SK-N-SH (cell line): ENCODE measurements at regions of chr6 and their contacts with region 1.

Region 1: DNA sequence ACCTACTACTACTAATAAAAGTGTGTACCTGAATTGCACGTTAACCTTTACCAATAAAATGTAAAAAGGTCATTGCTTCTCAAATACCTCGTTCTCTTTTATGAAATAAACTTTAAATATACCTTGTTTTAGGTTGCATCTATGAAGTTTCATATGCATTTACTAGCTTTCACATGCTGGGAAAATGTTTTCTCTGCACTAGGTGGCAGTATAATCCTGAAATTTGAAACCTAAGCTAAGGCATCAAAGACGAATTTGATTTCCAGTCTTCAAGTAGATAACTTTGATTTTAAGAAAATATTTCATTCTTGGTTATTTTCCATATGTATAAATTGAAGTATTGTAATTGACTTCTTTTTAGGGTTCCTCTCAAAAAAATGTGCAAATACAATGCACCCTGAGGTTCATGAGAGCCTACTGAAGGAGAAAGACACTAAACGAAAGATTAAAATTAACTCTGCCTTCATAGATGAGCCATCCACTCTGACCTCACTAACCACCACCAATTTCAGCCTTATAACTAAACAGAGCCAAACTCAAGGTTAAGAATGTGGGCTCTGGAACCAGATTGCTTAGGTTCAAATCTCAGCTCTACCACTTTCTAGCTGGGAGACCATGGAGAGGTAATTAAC is 7.3 kb upstream of the COL9A1 start:
- DNase-seq: peak; percentile 8
- H3K4me3 ChIP-seq: peak overlapping the region in 1 of 2 experiments; percentile 11; a peak in 1 of 4 replicates
- H3K27ac ChIP-seq: no peak overlapping the region
- H3K4me1 ChIP-seq: no peaks in the 10 kb centered on the region
- H3K27me3 ChIP-seq: peaks cover under 1% of the 10 kb centered on the region; the same call in 1 of the 2 replicates
- CTCF ChIP-seq: peak; percentile 83
- EP300 ChIP-seq: no peak
- RAD21 ChIP-seq: peak; percentile 82

Region 2: DNA sequence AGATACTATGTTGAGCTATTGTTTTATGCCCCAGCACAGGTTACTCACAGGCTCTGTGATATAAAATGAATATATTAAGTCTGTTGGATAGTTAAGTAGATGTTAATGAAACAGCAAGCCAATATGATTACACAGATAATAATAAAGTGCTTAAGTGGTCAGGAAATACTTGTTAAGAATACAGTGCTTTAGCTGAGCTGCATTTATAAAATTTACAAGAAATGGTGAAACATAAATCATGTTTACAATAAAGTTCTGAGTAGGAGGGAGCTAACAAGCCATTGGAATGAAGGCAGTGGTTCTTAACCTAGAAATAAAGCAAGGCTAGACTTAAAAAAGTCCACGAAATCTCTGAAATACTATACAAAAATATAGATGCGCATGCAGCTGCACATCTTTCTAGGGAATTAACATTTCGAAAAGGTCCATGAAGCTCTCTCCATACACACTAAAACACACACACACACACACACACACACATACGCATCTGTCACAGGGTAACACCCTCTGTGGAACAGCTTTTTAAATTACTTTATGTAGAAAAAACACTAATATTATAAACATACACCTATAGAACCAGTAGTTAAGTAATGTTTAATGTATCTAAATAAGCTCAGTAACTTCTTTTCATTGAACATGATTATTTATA is 94.6 kb before region 1 on chr6:
- CTCF ChIA-PET with region 1: interaction called, 50 read pairs
- POLR2A ChIA-PET with region 1: no interaction called
- DNase-seq: no peak
- H3K4me3 ChIP-seq: no peak overlapping the region
- H3K27ac ChIP-seq: no peak overlapping the region
- H3K4me1 ChIP-seq: no peaks in the 10 kb centered on the region
- H3K27me3 ChIP-seq: no peaks in the 10 kb centered on the region
- CTCF ChIP-seq: no peak
- EP300 ChIP-seq: no peak
- RAD21 ChIP-seq: no peak

Region 3: GRCh38 chr6:70289299-70289698 is 20.9 kb before region 1 on chr6:
- CTCF ChIA-PET with region 1: interaction called, 31 read pairs
- POLR2A ChIA-PET with region 1: no interaction called
- DNase-seq: peak; percentile 13
- H3K4me3 ChIP-seq: no peak overlapping the region
- H3K27ac ChIP-seq: no peak overlapping the region
- H3K4me1 ChIP-seq: no peaks in the 10 kb centered on the region
- H3K27me3 ChIP-seq: no peaks in the 10 kb centered on the region
- CTCF ChIP-seq: peak; percentile 25; the same call in 1 of the 2 replicates
- EP300 ChIP-seq: no peak
- RAD21 ChIP-seq: no peak

Region 4: GRCh38 chr6:70336996-70337742 is 27.0 kb after region 1 on chr6:
- CTCF ChIA-PET with region 1: interaction called, 42 read pairs
- POLR2A ChIA-PET with region 1: no interaction called
- DNase-seq: no peak
- H3K4me3 ChIP-seq: no peak overlapping the region
- H3K27ac ChIP-seq: no peak overlapping the region
- H3K4me1 ChIP-seq: no peaks in the 10 kb centered on the region
- H3K27me3 ChIP-seq: no peaks in the 10 kb centered on the region
- CTCF ChIP-seq: no peak
- EP300 ChIP-seq: no peak
- RAD21 ChIP-seq: no peak

Region 5: GRCh38 chr6:70369332-70369950 is 59.3 kb after region 1 on chr6:
- CTCF ChIA-PET with region 1: interaction called, 321 read pairs
- POLR2A ChIA-PET with region 1: no interaction called
- DNase-seq: peak; percentile 60
- H3K4me3 ChIP-seq: peak overlapping the region in 1 of 2 experiments; percentile 24; a peak in 1 of 4 replicates
- H3K27ac ChIP-seq: no peak overlapping the region
- H3K4me1 ChIP-seq: no peaks in the 10 kb centered on the region; a peak in 2 of 4 replicates
- H3K27me3 ChIP-seq: peaks cover 6% of the 10 kb centered on the region; the same call in 1 of the 2 replicates
- CTCF ChIP-seq: peak; percentile 89
- EP300 ChIP-seq: no peak
- RAD21 ChIP-seq: peak; percentile 85

Region 6: DNA sequence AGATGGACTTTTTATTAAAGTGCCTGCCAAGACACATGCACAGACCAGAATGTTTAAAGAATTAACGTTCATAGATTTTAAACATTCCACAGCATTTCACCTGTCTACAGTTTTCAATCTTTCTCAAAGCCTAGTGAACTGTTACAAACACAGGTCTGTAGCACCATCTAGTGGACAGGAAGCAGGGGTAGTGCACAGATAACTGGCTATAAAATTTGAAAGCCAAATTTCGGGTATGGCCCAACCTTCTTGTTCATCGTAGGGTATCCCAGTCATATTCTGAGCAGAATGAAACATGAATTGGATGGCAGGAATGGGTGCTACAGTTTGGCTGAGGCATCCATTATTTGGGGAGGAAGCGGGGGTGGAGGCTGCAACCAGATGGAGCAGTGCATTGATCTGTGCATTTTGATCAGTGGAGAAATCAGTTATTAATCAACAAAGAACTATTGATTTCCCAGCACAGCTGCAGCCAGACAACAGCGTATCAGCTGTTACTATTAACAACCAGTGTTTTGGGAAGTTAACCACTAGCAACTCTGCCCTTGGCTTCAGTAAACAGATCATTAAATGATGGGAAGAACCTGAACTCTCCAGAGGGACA is 702.8 kb after region 1 on chr6:
- CTCF ChIA-PET with region 1: interaction called, 10 read pairs
- POLR2A ChIA-PET with region 1: no interaction called
- DNase-seq: peak; percentile 56
- H3K4me3 ChIP-seq: no peak overlapping the region
- H3K27ac ChIP-seq: no peak overlapping the region
- H3K4me1 ChIP-seq: no peaks in the 10 kb centered on the region
- H3K27me3 ChIP-seq: no peaks in the 10 kb centered on the region
- CTCF ChIP-seq: peak; percentile 86
- EP300 ChIP-seq: no peak
- RAD21 ChIP-seq: peak; percentile 90